Calu3 (cell line): ENCODE measurements at regions of chr5 and their contacts with region 1.

Region 1: GRCh38 chr5:145887976-145888574 is 15.3 kb upstream of the GRXCR2 start:
- DNase-seq: peak; percentile 72
- H3K4me3 Mint-ChIP-seq: no peak overlapping the region
- H3K27ac Mint-ChIP-seq: no peak overlapping the region
- H3K4me1 Mint-ChIP-seq: no peaks in the 10 kb centered on the region
- H3K27me3 Mint-ChIP-seq: no peaks in the 10 kb centered on the region
- CTCF ChIP-seq: peak; percentile 74

Region 2: DNA sequence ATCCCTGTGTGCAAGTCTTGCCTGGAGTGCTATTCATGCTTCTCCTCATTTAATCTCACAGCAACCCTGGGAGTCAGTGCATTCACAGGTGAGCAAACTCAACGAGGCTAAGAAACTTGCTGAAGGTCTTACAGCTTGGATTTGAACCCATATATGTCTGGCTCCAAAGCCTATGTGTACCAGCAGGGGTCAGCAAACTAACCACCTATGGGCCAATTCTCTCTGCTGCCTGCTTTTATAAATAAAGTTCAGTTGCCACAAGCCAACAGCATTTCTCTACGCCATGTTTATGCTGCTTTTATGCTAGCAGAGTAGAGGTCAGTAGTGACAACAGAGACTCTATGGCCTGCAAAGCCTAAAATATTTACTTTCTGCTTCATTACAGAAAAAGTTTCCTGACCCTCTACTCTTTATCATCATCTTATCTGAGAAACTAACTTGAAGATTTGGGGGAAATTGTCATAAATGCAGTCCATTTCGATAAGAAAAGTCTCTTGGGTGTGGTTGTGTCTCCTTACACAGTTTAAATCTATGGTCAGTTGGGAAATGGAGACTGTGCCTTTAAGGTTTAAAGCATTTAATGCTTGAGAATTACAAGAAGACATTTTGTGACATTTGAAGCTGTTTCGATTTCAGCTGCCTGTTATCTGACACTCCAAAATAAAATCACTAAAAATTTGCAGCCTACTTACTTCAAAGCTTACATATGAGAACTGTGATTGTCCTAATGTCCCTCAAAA is 190.7 kb before region 1 on chr5:
- CTCF ChIA-PET with region 1: interaction called, 10 read pairs
- intact Hi-C with region 1: loop called (anchors 5 kb)
- DNase-seq: peak; percentile 54
- H3K4me3 Mint-ChIP-seq: no peak overlapping the region
- H3K27ac Mint-ChIP-seq: no peak overlapping the region
- H3K4me1 Mint-ChIP-seq: no peaks in the 10 kb centered on the region
- H3K27me3 Mint-ChIP-seq: no peaks in the 10 kb centered on the region
- CTCF ChIP-seq: peak; percentile 55

Region 3: DNA sequence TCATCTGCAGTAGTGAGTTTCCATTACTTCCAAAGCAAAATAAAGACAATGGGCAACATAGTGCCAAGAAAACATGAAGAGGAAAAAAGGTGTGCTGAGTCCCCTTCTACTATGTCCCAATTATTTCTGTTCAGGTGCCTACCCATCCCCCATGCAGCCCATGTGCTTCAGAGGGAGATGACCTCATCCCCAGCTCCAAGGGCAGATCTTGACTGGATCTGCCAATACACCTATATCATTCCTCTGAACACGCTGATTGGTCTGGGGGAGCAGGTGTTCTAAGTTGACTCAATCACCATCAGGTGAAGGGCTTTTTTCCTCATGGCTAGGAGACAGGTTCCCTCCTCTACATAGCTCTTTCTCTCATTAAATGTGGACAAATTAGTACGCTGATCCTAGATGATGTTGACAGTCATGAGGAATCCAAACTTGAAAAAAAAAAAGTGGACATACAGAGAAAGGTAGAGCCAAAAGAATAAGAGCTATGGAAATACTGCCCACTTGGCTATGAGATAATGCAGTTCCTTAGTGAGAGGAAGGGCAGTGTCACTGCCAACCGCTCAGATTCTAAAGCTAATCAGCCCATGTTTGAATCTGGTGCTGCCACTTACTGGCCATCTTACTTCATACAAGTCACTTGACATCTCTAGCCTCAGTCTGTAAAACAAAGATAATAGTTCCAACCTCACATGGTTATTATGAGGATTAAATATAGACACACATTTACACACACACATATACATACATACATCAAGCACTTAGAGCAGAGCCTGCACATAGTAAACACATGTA is 76.0 kb before region 1 on chr5:
- CTCF ChIA-PET with region 1: interaction called, 15 read pairs
- intact Hi-C with region 1: no loop called
- DNase-seq: no peak
- H3K4me3 Mint-ChIP-seq: no peak overlapping the region
- H3K27ac Mint-ChIP-seq: no peak overlapping the region
- H3K4me1 Mint-ChIP-seq: no peaks in the 10 kb centered on the region
- H3K27me3 Mint-ChIP-seq: no peaks in the 10 kb centered on the region
- CTCF ChIP-seq: no peak

Region 4: GRCh38 chr5:145825751-145826180 is 62.3 kb before region 1 on chr5:
- CTCF ChIA-PET with region 1: interaction called, 5 read pairs
- intact Hi-C with region 1: loop called (anchors 2 kb)
- DNase-seq: peak; percentile 31
- H3K4me3 Mint-ChIP-seq: no peak overlapping the region
- H3K27ac Mint-ChIP-seq: no peak overlapping the region
- H3K4me1 Mint-ChIP-seq: peaks cover 17% of the 10 kb centered on the region
- H3K27me3 Mint-ChIP-seq: no peaks in the 10 kb centered on the region
- CTCF ChIP-seq: peak; percentile 89

Region 5: DNA sequence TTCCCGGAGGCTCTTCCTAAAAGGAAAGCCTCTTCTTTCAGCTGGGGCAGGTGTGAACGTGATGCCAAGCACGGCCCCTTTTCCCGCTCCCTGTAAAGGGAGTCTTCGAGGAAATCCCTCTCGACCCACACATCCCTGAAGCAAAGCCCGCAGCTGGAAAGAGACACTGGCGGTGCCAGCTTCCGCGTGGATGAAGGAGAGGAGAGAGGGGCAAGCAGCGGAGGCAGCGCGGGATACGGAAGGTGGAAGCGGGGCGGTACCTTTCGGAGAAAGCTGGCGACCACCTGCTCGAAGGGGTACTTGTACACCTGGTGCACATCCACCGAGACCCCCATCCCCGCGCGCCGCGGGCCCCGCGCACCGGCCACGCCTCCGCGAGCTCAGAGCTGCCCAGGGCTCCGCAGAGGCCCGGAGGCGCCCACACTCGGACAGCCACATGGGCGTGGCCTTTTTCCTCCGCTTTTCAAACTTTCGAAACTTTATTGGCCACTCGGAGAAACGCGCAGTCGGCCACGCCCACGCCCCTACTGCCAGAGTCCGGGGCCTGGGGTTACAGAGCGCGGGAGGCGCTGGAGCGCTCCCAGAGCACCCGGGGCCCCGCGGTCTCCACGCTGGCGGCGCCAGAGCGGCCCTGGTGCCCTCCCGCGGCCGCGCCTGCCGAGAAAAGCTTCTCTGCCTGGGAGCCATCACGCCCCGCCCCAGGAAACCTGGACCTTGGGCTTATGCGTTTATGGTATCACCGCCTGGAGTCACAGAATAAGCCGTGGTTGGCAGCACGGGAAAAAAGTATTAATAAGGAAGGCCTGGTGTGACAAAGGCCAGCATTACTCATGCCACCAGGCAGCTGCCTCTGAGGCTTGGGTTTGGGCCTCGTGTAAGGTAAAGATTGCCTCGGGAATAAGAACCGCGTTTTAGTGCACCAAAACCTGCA is 52.9 kb before region 1 on chr5 and contains the start of gene PRELID2:
- CTCF ChIA-PET with region 1: interaction called, 8 read pairs
- intact Hi-C with region 1: loop called (anchors 2 kb)
- DNase-seq: peak; percentile 96
- H3K4me3 Mint-ChIP-seq: peak within 1 kb of the TSS; percentile 76
- H3K27ac Mint-ChIP-seq: peak within 1 kb of the TSS; percentile 40
- H3K4me1 Mint-ChIP-seq: peaks cover 73% of the 10 kb centered on the region
- H3K27me3 Mint-ChIP-seq: no peaks in the 10 kb centered on the region
- CTCF ChIP-seq: no peak
- total RNA-seq, gene PRELID2: 33.2 and 33.4 TPM in 2 replicates